ENCODE measurements at regions of chr16 and their contacts with region 1.

Region 1: DNA sequence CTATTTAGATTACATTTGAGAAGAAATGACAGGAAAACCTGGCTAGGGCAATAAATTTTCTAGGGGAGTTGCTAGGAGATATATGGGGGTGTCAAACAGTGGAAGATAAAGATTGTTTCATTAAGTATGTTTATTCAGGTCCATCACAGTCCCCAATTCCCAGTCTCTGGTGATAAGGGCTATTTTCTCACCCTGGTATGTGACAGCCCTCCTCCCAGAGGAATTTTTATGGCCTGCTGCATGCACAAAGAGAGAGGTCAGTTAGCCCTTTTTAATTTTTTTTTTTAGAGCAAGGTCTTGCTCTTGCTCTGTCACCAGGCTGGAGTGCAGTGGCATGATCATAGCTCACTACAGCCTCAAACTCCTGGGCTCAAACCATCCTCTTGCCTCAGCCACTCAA is 53.6 kb upstream of the ATF7IP2 start:
- DNase-seq: no peak
- H3K4me3 Mint-ChIP-seq: no peak overlapping the region
- H3K27ac Mint-ChIP-seq: no peak overlapping the region
- H3K4me1 Mint-ChIP-seq: peaks cover 55% of the 10 kb centered on the region
- H3K27me3 Mint-ChIP-seq: no peaks in the 10 kb centered on the region

Region 2: DNA sequence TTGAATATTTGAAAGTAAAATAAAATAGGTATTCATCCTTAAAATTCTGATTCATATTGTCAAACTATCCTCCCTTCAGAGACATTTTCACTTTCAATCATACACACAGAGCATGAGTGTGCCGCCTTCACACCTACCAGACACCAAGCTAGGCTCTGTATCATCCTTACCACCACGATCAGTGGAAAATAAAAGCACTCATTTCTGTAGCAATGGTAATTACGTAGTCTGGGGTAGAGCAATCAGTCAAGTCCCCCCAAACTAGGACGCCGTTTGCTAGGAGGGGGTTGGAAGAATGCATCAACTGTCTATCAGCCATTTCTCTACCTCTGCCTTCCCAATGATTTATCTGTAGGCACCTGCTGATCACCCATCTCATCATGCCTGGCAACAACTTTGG is 65.4 kb before region 1 on chr16:
- intact Hi-C with region 1: loop called (anchors 2 kb)
- DNase-seq: no peak
- H3K4me3 Mint-ChIP-seq: no peak overlapping the region
- H3K27ac Mint-ChIP-seq: peak overlapping the region; percentile 49
- H3K4me1 Mint-ChIP-seq: peaks cover 6% of the 10 kb centered on the region
- H3K27me3 Mint-ChIP-seq: no peaks in the 10 kb centered on the region

Region 3: DNA sequence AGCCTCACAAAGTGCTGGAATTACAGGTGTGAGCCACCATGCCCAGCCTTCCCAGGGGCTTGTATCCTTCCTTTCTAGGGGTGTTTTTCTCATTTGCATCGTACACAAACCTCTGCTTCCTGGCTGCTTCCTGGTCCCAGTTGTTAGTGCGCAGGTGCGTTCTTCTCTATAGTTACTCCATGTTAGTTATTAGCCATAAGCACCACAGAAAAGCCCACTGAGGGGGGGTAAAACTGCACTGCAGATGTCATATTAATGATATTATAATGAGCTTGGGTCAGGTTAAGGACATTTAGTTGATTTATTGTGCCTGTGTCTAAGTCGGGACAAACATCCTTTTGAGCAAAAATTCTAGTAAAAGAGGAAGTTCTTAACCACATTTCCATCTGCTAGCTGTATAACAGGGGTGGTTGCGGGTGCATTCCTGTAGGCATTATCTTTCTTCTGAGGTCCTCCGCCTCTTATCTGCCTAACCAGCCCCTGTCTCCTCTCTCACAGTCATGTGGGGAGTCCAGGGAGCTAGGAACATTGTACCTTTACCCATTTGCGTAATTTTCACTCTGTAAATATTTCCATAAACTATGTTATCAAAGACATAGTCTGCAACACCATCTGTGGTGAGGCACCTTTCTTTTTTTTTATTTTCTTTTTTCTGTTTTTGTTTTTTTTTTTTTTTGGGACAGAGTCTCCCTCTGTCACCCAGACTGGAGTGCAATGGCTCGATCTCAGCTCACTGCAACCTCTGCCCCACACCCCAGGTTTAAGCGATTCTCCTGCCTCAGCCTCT is 30.0 kb after region 1 on chr16:
- intact Hi-C with region 1: loop called (anchors 2 kb)
- DNase-seq: peak; percentile 11
- H3K4me3 Mint-ChIP-seq: peak overlapping the region; percentile 32
- H3K27ac Mint-ChIP-seq: peak overlapping the region; percentile 74
- H3K4me1 Mint-ChIP-seq: peaks cover 20% of the 10 kb centered on the region
- H3K27me3 Mint-ChIP-seq: no peaks in the 10 kb centered on the region

Region 4: DNA sequence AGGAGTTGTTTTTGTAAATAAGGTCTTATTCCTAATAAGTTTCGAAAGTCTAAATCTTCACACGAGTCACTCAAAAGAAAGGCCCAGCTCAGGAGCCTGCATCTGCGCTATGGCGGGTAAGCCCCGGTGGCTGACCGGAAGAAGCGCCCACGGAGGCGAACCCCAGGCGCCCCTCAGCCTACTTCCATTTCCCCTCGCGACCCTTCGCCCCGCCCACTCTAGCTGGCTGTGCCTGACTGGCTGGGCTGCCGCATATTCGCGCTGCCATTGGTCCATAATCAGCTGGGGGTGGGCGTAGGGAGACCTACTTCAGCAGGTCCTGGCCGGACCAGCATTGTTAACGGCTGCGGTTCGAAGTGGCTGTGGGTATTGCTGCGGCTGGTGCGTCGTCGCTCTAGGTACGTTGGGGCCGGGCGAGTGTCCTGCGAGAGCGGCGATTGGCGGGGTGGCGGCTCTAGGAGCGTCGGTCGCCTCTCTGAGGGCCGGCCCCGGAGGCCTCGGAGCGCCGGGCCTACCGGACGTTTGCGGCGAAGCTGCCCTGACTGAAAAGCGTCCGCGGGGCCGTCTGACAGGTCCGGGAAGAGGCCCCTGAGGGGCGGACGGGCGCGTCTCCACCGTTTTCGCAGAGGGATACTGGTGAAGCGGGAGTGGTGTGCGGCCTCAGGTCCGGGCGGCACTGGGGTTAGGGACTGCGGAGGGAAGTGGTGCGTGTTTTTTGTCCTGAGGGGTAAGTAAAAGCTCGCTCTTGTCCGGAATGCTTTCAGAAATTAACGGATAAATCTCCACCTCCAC is 53.7 kb after region 1 on chr16 and contains the start of gene ATF7IP2:
- intact Hi-C with region 1: loop called (anchors 2 kb)
- DNase-seq: peak; percentile 87
- H3K4me3 Mint-ChIP-seq: peak within 1 kb of the TSS; percentile 97
- H3K27ac Mint-ChIP-seq: peak within 1 kb of the TSS; percentile 97
- H3K4me1 Mint-ChIP-seq: peaks cover 58% of the 10 kb centered on the region
- H3K27me3 Mint-ChIP-seq: no peaks in the 10 kb centered on the region
- total RNA-seq, gene ATF7IP2: 25.9 and 28.7 TPM in 2 replicates

Region 5: GRCh38 chr16:10876799-10877341 is 544.6 kb after region 1 on chr16 and contains the start of gene CIITA:
- intact Hi-C with region 1: loop called (anchors 5 kb)
- DNase-seq: peak; percentile 53
- H3K4me3 Mint-ChIP-seq: peak within 1 kb of the TSS; percentile 86
- H3K27ac Mint-ChIP-seq: peak within 1 kb of the TSS; percentile 59
- H3K4me1 Mint-ChIP-seq: peaks cover 88% of the 10 kb centered on the region
- H3K27me3 Mint-ChIP-seq: peaks cover 14% of the 10 kb centered on the region
- total RNA-seq, gene CIITA: 12.0 and 13.0 TPM in 2 replicates

Measured in activated T-helper 1 cell treated with anti-CD3 and anti-CD28 coated beads, Interleukin-12 subunit alpha, Interleukin-12 subunit beta, Interleukin-2, Interleukin-4 antibody, amounts not matched to agents 30 ng/mL and 10 ng/mL and 1 ng/mL, durations not matched to agents 14 hours and 24 hours and 36 hours (primary cell).